Lower leg skin (tissue), 4 donors: ENCODE measurements at regions of chr2 and their contacts with region 1.

Region 1: DNA sequence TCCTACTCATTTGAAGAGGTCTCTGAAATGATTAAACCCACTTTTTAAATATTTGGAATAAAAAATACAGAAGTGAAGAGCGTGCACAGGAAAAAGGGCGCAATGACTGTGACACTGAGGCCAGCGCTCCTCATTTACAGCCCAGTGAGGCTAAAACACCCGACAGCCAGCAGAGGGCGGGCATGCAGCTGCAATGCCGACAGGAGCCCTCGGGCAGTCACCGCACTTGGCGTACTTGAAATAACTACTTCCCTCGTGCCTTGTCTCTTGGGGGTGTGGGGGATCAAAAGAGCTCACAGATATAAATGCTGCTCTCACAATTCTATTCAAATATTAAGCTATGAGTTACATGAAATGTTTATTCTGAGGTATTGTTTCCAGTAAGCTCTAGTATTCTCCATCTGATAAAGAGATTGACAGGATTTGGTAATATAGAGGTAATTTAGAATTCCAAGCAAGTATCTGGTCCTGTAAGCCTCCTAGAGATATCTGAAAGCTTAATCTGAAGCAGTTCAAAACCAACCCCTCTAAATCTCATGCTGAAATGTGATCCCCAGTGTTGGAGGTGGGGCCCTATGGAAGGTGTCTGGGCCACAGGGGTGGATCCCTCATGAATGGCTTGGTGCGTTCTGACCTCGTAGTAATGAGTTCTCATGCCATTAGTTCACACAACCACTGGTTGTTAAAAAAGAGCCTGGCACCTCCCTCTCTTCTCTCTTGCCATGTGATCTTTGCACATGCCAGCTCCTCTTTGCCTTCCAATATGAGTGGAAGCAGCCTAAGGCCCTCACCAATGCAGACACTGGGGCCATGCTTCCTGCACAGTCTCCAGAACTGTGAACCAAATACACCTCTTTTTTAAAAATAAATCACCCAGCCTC is 93.6 kb downstream of the ZAP70 start:
- DNase-seq: peak; percentile 76 to 95
- H3K4me3 ChIP-seq: no peak overlapping the region
- CTCF ChIP-seq: peak in 1 of 3 donors; percentile 62
- POLR2A ChIP-seq: no peak

Region 2: DNA sequence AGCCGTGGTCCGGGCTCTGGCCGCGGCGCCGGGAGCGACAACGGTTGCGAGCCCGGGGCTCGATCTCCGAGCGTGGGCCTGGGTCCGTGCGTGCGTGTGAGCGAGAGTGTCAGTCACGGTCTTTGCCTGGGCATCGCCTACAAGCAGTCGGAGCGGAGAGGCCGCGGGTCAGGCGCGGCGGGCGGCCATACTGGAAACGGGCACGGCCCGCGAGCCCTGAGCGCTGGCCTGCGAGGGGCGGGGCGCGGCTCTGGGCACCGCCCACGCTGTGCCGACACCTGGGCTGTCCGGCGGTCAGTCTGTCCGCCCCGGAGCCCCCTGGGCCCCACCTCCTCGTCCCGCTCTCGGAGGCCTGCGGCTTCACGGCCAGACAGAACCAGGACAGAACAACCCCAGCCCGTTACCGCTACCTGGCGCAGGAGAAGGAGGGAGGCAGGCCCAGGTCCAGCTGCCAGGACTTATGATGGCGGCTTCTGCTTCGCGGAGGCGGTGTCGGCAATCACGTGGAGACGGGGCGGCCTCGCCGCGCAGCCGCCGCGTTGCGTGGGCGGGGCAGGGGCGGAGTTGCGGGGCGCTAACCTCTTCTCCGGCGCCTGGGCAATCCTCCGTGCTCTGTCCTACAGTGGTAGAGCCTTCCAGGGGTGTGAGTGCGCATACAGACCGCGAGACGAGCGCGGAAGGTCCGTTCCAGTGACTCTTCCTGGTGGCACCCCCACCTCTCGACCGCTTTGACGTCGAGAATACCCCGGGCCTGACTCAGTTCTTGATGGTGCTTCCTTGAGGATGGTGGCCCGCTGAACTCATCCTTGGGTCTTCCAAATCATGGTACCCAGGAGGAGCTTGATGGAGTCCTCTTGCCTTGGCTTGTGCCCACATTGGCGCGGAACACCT is 189.0 kb after region 1 on chr2 and contains the start of gene TMEM131:
- intact Hi-C with region 1: no loop called
- DNase-seq: peak; percentile 92 to 99
- H3K4me3 ChIP-seq: peak within 1 kb of the TSS; percentile 76
- CTCF ChIP-seq: no peak
- POLR2A ChIP-seq: peak in 1 of 2 donors; percentile 30
- total RNA-seq, gene TMEM131: 32.8 to 54.8 (median 41.2) TPM

Region 3: GRCh38 chr2:98269274-98269673 is 462.3 kb after region 1 on chr2:
- intact Hi-C with region 1: loop called (anchors 5 kb)
- DNase-seq: peak in 1 of 2 donors; percentile 24
- H3K4me3 ChIP-seq: no peak overlapping the region
- CTCF ChIP-seq: no peak
- POLR2A ChIP-seq: no peak